Activated T-helper 2 cell treated with anti-CD3 and anti-CD28 coated beads, Interferon-gamma antibody, Interleukin-2, Interleukin-4, amounts not matched to agents 10 μg/mL and 5 μg/mL and 100 μg/mL, durations not matched to agents 14 hours and 24 hours and 36 hours (primary cell): ENCODE measurements at regions of chr3 and their contacts with region 1.

Region 1: GRCh38 chr3:9932843-9933560 is 632 bp upstream of the CRELD1 start:
- DNase-seq: peak; percentile 79
- H3K4me3 Mint-ChIP-seq: peak overlapping the region; percentile 98
- H3K27ac Mint-ChIP-seq: peak overlapping the region; percentile 90
- H3K4me1 Mint-ChIP-seq: peaks cover 29% of the 10 kb centered on the region
- H3K27me3 Mint-ChIP-seq: no peaks in the 10 kb centered on the region

Region 2: DNA sequence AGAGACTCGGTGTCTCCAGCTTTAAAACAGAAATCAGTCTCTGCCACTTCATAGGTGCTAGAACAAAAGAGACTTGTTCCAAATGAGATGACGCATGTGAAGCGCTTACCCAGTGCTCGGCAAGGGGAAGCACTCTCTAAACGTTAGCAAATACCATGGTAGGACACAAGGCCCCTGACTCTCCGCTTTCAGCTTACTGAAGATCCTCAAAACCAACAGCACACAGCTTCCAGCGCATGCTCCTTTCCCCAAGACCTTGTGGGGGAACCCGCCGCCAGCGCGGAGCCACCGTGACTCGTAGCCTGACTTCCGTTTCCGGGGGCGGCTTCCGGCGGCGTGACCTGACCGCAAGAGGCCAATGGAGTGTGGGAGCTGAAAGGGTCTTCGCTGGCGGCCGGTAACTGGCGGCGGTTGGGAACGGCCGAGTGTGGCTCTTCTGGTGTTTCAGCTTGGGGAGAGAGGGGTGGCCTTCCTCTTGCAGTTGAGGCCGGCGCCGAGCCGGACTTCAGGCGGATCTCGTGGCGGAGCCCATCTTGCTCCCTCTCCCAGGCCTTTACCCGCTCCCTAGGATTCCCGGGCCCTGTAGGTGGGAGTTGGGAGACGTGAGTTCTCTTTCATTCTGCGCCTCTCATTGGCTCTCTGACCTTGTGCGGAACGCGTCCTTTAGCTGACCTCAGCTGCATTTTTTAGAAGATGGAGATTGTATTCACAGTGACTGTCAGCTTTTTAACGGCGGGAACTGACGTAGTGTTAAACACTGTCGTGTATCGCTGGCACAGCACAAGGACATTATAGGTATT is 570.1 kb before region 1 on chr3 and contains the start of gene THUMPD3:
- intact Hi-C with region 1: no loop called
- DNase-seq: peak; percentile 89
- H3K4me3 Mint-ChIP-seq: peak within 1 kb of the TSS; percentile 98
- H3K27ac Mint-ChIP-seq: peak within 1 kb of the TSS; percentile 99
- H3K4me1 Mint-ChIP-seq: peaks cover 19% of the 10 kb centered on the region
- H3K27me3 Mint-ChIP-seq: no peaks in the 10 kb centered on the region
- total RNA-seq, gene THUMPD3: 56.5 and 57.7 TPM in 2 replicates

Region 3: DNA sequence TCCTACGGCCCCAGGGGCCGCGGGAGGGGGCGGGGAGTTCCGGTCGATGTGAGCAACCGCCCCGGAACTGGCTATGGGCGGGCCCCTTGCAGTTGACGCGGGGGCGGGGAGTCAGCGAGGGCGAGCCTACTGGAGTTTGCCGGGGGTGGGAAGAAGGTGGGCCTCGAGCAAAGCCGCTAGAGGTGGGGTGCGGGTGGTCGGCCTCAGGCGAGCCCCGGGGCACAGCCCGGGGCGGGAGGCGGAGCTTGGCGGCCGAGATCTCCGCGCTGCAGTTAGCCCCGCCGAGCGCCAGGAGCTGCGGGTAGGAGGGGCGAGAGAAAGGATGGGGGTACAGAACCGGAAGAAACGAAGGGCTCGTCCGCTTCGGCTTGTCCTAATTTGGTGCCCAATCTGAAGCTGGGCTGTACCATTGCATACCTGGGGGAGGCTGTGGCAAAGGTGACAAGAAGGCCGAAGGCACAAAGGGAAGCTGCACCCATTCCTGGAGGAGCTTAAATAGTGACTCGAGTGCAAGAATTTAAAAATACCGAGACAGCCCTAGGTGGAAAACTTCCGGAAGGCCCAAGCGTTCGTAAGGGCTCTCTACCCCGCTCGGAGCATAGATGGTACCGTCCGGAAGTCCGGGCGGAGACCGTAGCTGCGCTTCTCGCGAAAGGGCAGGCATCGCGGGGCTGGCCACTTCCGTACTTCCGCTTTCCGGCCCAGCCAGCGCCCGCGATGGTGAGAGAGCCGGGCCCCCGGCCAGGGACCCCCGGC is 140.4 kb before region 1 on chr3 and contains the starts of genes ARPC4 and TADA3:
- intact Hi-C with region 1: loop called (anchors 5 kb)
- DNase-seq: peak; percentile 90
- H3K4me3 Mint-ChIP-seq: peak within 1 kb of the TSS; percentile 99
- H3K27ac Mint-ChIP-seq: peak within 1 kb of the TSS; percentile 98
- H3K4me1 Mint-ChIP-seq: peaks cover 55% of the 10 kb centered on the region
- H3K27me3 Mint-ChIP-seq: no peaks in the 10 kb centered on the region
- total RNA-seq, gene ARPC4: 253 and 268 TPM in 2 replicates
- total RNA-seq, gene TADA3: 86.6 and 89.2 TPM in 2 replicates

Region 4: DNA sequence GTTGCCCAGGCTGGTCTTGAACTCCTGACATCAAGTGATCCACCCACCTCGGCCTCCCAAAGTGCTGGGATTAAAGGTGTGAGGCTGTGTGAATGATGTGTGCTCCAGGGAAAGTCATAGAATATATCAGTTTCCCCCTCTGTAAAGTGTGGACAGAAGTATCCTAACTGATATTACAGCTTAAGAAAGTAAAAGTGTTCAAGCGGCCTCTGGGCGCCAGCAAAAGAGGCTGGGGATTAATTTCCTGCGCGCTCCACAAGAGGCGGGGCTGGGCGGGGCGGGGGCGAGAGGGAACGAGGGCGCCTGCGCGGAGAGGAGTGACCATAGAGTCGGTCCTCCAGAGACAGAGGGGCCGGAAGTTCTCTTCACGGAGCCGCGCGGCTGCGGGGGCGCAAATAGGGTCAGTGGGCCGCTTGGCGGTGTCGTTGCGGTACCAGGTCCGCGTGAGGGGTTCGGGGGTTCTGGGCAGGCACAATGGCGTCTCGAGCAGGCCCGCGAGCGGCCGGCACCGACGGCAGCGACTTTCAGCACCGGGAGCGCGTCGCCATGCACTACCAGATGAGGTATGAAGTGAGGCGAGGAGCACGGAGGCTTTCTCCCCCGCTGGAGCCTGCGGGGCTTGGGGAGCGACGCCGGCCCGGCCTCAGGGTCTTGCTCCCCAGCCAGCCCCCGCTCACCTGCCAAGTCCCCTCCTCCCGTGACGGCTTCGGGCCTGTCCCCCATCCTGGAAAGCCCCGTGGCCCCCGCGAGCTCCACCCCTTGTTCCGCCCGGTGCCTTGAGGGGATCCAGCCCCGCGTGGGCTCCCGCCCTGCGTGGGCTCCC is 42.5 kb before region 1 on chr3 and contains the start of gene JAGN1:
- intact Hi-C with region 1: loop called (anchors 1 kb)
- DNase-seq: peak; percentile 83
- H3K4me3 Mint-ChIP-seq: peak within 1 kb of the TSS; percentile 97
- H3K27ac Mint-ChIP-seq: peak within 1 kb of the TSS; percentile 99
- H3K4me1 Mint-ChIP-seq: peaks cover 31% of the 10 kb centered on the region
- H3K27me3 Mint-ChIP-seq: no peaks in the 10 kb centered on the region
- total RNA-seq, gene JAGN1: 31.7 and 33.3 TPM in 2 replicates

Region 5: GRCh38 chr3:9946112-9947024 is 13.4 kb after region 1 on chr3:
- intact Hi-C with region 1: loop called (anchors 2 kb)
- DNase-seq: peak; percentile 85
- H3K4me3 Mint-ChIP-seq: peak overlapping the region; percentile 84
- H3K27ac Mint-ChIP-seq: peak overlapping the region; percentile 87
- H3K4me1 Mint-ChIP-seq: peaks cover 12% of the 10 kb centered on the region
- H3K27me3 Mint-ChIP-seq: no peaks in the 10 kb centered on the region

Region 6: DNA sequence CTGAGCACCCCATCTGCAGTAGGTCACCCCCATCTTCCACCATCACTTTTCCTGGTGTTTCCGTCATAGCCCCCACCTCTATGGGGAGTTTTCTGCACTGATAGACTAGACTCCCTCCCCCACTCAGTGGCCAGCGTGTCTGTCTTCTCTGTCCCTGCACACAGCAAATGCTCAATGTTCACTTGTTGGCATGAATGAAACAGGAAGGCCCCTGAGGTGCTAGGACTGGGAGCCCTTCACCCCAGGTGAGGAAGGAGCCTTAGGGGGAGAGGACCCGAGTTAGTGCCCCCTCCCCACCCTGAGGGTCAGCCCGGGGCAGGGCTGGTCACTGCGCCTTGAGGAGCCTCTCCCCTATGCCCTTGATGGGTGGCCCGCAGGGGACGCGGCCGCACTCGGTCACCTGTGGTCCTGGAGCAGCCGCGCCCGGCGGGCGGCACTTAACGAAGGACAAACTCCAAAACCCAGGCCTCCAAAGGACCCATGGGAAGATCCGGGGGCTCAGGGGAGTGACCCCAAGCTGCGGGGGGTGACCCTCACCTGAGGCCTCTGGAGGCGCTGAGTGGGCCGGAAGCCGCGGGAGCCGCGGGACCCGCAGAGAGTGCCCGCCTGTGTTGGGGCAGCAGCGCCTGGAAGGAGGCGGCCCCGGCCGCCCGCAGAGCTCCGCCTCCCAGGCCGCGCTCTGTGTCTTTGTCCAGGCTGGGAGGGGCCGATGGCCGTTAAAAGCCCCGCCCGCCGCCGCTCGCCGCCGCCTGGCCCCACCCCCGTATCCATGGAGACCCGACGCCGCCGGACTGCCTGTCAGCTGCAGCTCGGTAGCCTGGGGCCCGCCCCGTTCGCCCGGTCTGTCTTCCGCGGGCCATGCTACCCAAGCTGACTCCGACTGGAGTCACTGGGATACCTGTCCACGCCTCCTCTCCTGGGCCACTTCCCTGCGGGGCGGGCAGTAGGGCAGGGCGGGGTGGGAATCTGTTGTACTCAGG is 77.8 kb after region 1 on chr3:
- intact Hi-C with region 1: loop called (anchors 2 kb)
- DNase-seq: peak; percentile 86
- H3K4me3 Mint-ChIP-seq: peak overlapping the region; percentile 42
- H3K27ac Mint-ChIP-seq: no peak overlapping the region
- H3K4me1 Mint-ChIP-seq: peaks cover 14% of the 10 kb centered on the region
- H3K27me3 Mint-ChIP-seq: no peaks in the 10 kb centered on the region

Region 7: DNA sequence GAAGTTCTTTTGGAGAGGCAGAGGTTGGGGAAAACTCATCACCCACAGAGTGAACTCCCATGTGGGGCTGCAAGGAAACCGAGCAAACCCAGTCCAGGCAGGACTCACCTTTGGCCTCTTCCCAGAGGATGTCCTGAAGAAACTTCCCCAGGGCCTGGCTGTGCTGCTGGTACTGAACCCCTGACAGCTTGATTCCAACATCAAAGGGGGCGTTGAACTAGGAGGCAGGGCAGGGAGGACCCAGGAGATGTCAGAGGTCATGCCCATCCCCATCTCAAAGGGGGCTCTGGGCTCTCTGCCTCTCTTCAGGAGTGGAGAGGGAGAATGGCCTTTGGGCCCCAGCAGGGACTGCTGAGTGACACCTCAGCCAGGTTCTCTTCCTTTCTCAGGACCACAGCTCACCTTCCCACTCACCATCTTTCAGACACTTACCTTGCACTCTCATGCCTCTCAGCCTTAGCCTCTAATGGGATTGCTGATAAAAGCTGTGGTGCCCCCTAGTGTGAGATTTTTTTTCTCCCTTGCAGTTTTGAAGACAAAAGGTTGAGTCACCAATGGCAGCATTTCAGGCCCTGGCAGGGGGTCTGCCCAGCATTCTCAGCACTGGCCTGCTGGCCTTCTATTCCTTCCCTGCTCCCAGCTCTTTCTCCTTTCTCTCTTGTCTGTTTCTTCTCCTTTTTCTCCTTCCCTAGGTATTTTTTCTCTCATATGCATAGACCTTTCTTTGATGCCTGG is 353.8 kb after region 1 on chr3:
- intact Hi-C with region 1: loop called (anchors 10 kb)
- DNase-seq: no peak
- H3K4me3 Mint-ChIP-seq: no peak overlapping the region
- H3K27ac Mint-ChIP-seq: no peak overlapping the region
- H3K4me1 Mint-ChIP-seq: peaks cover 37% of the 10 kb centered on the region
- H3K27me3 Mint-ChIP-seq: no peaks in the 10 kb centered on the region

Region 8: DNA sequence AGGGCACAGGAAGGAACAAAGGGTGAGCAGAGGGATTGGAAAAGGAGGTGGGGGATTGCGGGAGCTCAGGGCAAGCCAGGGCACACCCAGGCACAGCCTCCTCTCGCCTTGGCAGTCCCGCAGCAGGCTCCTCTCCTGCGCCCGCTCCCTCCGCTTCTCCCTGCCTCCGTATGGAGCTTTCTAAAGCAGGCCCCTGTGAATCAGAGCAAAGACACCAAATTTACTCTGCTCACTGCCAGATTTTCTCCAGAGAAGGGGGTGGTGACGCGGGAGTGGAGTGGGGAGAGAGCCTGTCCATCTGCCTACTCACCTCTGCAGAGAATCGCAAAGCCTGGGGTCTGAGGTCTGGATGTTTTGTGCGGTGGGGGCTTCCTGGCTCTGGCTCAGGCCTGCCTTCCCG is 552.4 kb after region 1 on chr3:
- intact Hi-C with region 1: no loop called
- DNase-seq: no peak
- H3K4me3 Mint-ChIP-seq: no peak overlapping the region
- H3K27ac Mint-ChIP-seq: no peak overlapping the region
- H3K4me1 Mint-ChIP-seq: no peaks in the 10 kb centered on the region
- H3K27me3 Mint-ChIP-seq: no peaks in the 10 kb centered on the region